CD4-positive, alpha-beta memory T cell (primary cell): ENCODE measurements at regions of chr6 and their contacts with region 1.

Region 1: GRCh38 chr6:131182991-131183425 is 47.7 kb downstream of the AKAP7 start:
- DNase-seq: peak; percentile 43 to 57 (median 53)
- H3K4me3 ChIP-seq: peak overlapping the region in 1 of 2 donors; percentile 36
- H3K4me3 Mint-ChIP-seq: peak overlapping the region in 7 of 8 donors; percentile 52 to 90 (median 69)
- H3K27ac ChIP-seq: no peak overlapping the region
- H3K27ac Mint-ChIP-seq: peak overlapping the region; percentile 25 to 96 (median 88)
- H3K4me1 ChIP-seq: peaks cover 10% of the 10 kb centered on the region
- H3K4me1 Mint-ChIP-seq: peaks cover 6 to 18% (median 11%) of the 10 kb centered on the region in 4 donors
- H3K27me3 ChIP-seq: no peaks in the 10 kb centered on the region
- H3K27me3 Mint-ChIP-seq: no peaks in the 10 kb centered on the region

Region 2: GRCh38 chr6:130743175-130743574 is 439.8 kb before region 1 on chr6:
- CTCF ChIA-PET with region 1: no interaction called
- POLR2A ChIA-PET with region 1: no interaction called
- intact Hi-C with region 1: no loop called
- DNase-seq: peak in 1 of 5 donors; percentile 33
- H3K4me3 ChIP-seq: no peak overlapping the region
- H3K4me3 Mint-ChIP-seq: no peak overlapping the region
- H3K27ac ChIP-seq: no peak overlapping the region
- H3K27ac Mint-ChIP-seq: no peak overlapping the region
- H3K4me1 ChIP-seq: no peaks in the 10 kb centered on the region
- H3K4me1 Mint-ChIP-seq: peaks cover 2 to 5% (median 4%) of the 10 kb centered on the region in 4 donors
- H3K27me3 ChIP-seq: no peaks in the 10 kb centered on the region
- H3K27me3 Mint-ChIP-seq: peaks cover 2 to 11% of the 10 kb centered on the region in 2 donors

Region 3: GRCh38 chr6:131205481-131206244 is 22.7 kb after region 1 on chr6:
- CTCF ChIA-PET with region 1: interaction called, 93 read pairs
- POLR2A ChIA-PET with region 1: interaction called, 36 read pairs
- intact Hi-C with region 1: no loop called
- DNase-seq: peak in 1 of 5 donors; percentile 12
- H3K4me3 ChIP-seq: no peak overlapping the region
- H3K4me3 Mint-ChIP-seq: peak overlapping the region in 3 of 8 donors; percentile 20 to 47 (median 31)
- H3K27ac ChIP-seq: no peak overlapping the region
- H3K27ac Mint-ChIP-seq: peak overlapping the region; percentile 11 to 67 (median 32)
- H3K4me1 ChIP-seq: peaks cover 50% of the 10 kb centered on the region
- H3K4me1 Mint-ChIP-seq: peaks cover 47 to 66% (median 56%) of the 10 kb centered on the region in 4 donors
- H3K27me3 ChIP-seq: no peaks in the 10 kb centered on the region
- H3K27me3 Mint-ChIP-seq: no peaks in the 10 kb centered on the region

Region 4: GRCh38 chr6:131460614-131461000 is 277.6 kb after region 1 on chr6:
- CTCF ChIA-PET with region 1: interaction called, 11 read pairs
- POLR2A ChIA-PET with region 1: no interaction called
- intact Hi-C with region 1: no loop called
- DNase-seq: no peak
- H3K4me3 ChIP-seq: no peak overlapping the region
- H3K4me3 Mint-ChIP-seq: no peak overlapping the region
- H3K27ac ChIP-seq: no peak overlapping the region
- H3K27ac Mint-ChIP-seq: no peak overlapping the region
- H3K4me1 ChIP-seq: peaks cover 4% of the 10 kb centered on the region
- H3K4me1 Mint-ChIP-seq: peaks cover 7 to 8% (median 7%) of the 10 kb centered on the region in 4 donors
- H3K27me3 ChIP-seq: no peaks in the 10 kb centered on the region
- H3K27me3 Mint-ChIP-seq: no peaks in the 10 kb centered on the region

Region 5: GRCh38 chr6:131519670-131520436 is 336.8 kb after region 1 on chr6:
- CTCF ChIA-PET with region 1: interaction called, 18 read pairs
- POLR2A ChIA-PET with region 1: interaction called, 3 read pairs
- intact Hi-C with region 1: no loop called
- DNase-seq: peak; percentile 45 to 51 (median 49)
- H3K4me3 ChIP-seq: no peak overlapping the region
- H3K4me3 Mint-ChIP-seq: peak overlapping the region in 1 of 8 donors; percentile 47
- H3K27ac ChIP-seq: no peak overlapping the region
- H3K27ac Mint-ChIP-seq: peak overlapping the region in 3 of 7 donors; percentile 8 to 44 (median 33)
- H3K4me1 ChIP-seq: peaks cover 10% of the 10 kb centered on the region
- H3K4me1 Mint-ChIP-seq: peaks cover 10 to 25% (median 18%) of the 10 kb centered on the region in 4 donors
- H3K27me3 ChIP-seq: no peaks in the 10 kb centered on the region
- H3K27me3 Mint-ChIP-seq: peaks cover 0 to 2% of the 10 kb centered on the region in 2 donors